PC-9 (cell line): ENCODE measurements at regions of chr1 and their contacts with region 1.

Region 1: DNA sequence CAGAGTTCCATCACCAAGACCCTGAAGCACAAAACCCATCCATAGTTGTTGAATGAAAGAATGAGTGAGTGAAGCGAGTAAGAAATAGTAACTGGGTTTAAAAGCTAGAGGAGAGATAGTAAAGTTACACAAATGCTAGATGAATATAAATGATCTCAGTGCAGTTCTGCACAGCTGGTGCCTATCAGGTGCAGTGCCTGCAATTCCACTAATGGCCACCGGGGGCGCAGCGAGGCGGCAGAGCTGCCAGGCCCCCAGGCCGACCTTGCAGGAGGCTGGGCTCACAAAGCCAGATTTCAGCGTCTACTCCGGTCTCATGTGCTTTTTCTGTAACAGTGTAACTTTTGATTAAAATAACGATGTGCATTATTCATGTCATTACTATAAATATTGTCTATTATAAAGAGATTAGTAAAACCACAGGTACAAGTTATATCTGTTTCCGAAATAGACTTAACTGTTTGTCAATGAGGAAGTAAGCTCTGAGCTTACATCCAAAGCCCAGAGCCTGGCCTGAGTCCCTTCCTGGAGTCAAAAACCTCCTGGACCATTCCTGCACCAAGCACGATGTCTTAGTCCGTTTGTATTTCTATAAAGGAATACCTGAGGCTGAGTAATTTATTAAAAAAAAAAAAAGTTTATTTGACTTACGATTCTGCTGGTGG is 477.6 kb downstream of the NPHP4 start:
- DNase-seq: peak in 1 of 2 experiments; percentile 62
- H3K4me3 ChIP-seq: no peak overlapping the region
- H3K27ac ChIP-seq: no peak overlapping the region
- H3K4me1 ChIP-seq: no peaks in the 10 kb centered on the region
- H3K27me3 ChIP-seq: peaks cover 14% of the 10 kb centered on the region
- CTCF ChIP-seq: peak; percentile 98

Region 2: GRCh38 chr1:5253036-5253435 is 261.6 kb before region 1 on chr1:
- CTCF ChIA-PET with region 1: no interaction called
- POLR2A ChIA-PET with region 1: no interaction called
- intact Hi-C with region 1: no loop called
- DNase-seq: no peak
- H3K4me3 ChIP-seq: no peak overlapping the region
- H3K27ac ChIP-seq: no peak overlapping the region
- H3K4me1 ChIP-seq: no peaks in the 10 kb centered on the region
- H3K27me3 ChIP-seq: peaks cover 5% of the 10 kb centered on the region; the same call in 1 of the 2 replicates
- CTCF ChIP-seq: no peak

Region 3: GRCh38 chr1:5481889-5482288 is 32.8 kb before region 1 on chr1:
- CTCF ChIA-PET with region 1: interaction called, 12 read pairs
- POLR2A ChIA-PET with region 1: no interaction called
- intact Hi-C with region 1: no loop called
- DNase-seq: peak; percentile 11 to 46
- H3K4me3 ChIP-seq: no peak overlapping the region
- H3K27ac ChIP-seq: no peak overlapping the region
- H3K4me1 ChIP-seq: no peaks in the 10 kb centered on the region
- H3K27me3 ChIP-seq: peaks cover 38% of the 10 kb centered on the region
- CTCF ChIP-seq: peak; percentile 45

Region 4: DNA sequence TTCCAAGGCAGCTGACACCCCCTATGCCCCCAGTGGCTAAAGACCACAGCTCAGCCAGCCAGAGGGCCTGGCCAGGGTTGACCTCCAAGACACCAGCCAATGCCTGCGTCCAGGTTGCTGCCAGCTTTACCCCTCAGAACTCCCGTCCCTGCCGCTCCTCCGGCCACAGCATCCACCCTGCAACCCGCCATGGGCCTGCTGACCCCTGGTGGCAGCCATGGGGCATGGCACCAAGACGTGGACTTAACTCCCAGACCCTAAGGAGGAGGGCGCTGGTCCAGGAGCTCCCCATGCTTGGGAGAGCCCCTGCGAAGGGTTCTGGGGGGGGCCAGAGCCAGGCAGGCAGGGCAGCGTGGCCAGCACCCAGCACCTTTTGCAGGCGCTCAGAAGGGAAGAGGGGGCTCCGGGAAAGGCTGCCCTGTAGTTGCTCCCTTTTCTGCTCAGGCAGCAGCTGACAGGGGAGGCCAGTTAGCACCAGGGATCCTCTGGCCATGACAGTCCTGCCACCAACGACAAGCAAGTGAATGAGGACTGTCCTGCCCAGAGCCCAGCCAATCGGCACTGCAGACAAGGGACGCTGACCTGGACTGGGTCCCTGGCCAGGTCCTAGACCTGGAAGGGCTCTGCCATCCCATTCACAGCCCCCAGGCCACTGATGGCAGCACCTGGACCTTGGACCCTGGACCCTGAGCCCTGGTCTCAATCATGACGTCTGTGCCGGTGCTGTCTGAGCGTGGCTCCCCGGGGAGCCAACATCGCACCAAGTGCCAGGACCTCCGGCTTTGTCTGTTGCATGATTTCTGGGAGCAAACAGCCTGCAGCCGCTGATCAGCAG is 231.3 kb after region 1 on chr1:
- CTCF ChIA-PET with region 1: no interaction called
- POLR2A ChIA-PET with region 1: no interaction called
- intact Hi-C with region 1: loop called (anchors 2 kb)
- DNase-seq: peak; percentile 45 to 57
- H3K4me3 ChIP-seq: no peak overlapping the region
- H3K27ac ChIP-seq: no peak overlapping the region
- H3K4me1 ChIP-seq: no peaks in the 10 kb centered on the region
- H3K27me3 ChIP-seq: peaks cover 55% of the 10 kb centered on the region
- CTCF ChIP-seq: peak; percentile 89

Region 5: DNA sequence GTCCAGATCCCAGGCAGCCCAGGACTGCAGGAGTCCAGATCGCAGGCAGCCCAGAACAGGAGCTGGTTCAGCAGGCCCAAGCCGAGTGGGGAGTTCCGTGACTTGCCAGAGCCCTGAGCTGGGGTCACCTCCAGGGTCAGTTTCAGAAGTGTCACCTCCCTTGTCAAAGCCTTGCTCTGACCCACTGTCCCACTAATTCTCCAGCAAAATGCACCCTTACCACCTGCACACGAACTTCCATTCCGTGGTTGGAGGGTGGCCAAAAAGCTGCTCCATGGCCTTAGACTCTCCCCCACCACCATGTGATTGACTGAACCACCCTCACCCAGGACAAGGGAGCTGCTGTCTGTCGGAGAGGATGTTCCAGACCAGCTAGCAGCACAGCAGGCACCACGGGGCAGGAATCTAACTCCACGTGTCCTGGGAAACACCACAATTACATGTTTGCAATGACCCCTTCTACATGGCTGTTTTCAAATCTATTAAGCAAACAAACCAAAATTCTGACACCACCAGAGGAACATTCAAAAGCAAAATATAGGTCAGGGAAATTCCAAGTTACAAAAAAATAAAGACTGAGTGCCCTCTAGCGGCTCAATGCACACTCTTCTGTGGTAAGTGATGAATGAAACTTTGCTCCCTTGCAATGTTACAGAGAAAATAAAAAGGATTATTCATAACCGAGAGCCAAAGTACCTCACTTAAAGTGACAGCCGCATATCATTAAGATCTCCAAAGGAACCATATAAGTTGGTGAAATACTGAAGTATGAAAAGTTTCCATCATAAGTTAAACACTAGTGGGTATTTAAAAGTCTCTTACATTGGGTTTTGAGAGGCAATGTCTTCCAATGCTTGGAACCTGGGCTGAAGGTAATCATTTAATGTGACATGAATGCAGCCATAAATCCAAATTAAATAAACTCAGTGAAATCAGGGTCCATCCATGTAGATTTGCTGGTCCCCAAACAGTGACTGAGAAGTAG is 401.2 kb after region 1 on chr1:
- CTCF ChIA-PET with region 1: no interaction called
- POLR2A ChIA-PET with region 1: no interaction called
- intact Hi-C with region 1: loop called (anchors 10 kb)
- DNase-seq: peak in 1 of 2 experiments; percentile 8
- H3K4me3 ChIP-seq: no peak overlapping the region
- H3K27ac ChIP-seq: no peak overlapping the region
- H3K4me1 ChIP-seq: no peaks in the 10 kb centered on the region
- H3K27me3 ChIP-seq: no peaks in the 10 kb centered on the region
- CTCF ChIP-seq: peak; percentile 63